Ascending aorta (tissue), 2 donors: ENCODE measurements at regions of chr20 and their contacts with region 1.

Region 1: DNA sequence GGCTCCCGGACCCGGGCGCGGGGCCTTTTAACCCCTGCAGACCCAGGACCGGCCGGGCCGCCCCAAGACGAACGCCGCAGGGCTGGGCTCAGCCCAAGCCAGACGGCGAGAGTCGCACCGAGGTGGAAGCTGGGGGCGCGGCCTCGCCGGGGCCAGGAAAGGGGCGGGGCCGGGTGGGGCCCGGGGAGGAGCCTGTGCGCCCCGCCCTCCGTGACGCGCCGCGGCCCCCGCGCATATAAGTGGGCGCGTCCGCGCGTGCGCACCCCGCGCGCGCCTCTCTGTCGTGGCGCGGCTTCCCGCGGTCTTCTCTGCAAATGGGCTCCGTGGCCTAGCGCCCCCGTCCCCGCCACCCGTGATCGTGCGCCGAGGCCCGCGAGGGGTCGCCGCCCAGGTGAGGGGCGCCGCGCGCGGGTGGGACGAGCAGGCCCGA is at the start of gene PPDPF:
- DNase-seq: peak in 1 of 2 donors; percentile 88
- H3K4me3 ChIP-seq: peak within 1 kb of the TSS; percentile 80 to 97
- H3K27ac ChIP-seq: peak within 1 kb of the TSS; percentile 83 to 90
- H3K4me1 ChIP-seq: peaks cover 16 to 18% of the 10 kb centered on the region in 2 donors
- H3K27me3 ChIP-seq: no peaks in the 10 kb centered on the region
- CTCF ChIP-seq: no peak
- total RNA-seq, gene PPDPF: 242 TPM

Region 2: GRCh38 chr20:63360850-63361518 is 159.5 kb before region 1 on chr20 and contains the start of gene CHRNA4:
- intact Hi-C with region 1: no loop called
- DNase-seq: no peak
- H3K4me3 ChIP-seq: no peak within 1 kb of the TSS
- H3K27ac ChIP-seq: no peak within 1 kb of the TSS
- H3K4me1 ChIP-seq: no peaks in the 10 kb centered on the region
- H3K27me3 ChIP-seq: peaks cover 14% of the 10 kb centered on the region
- CTCF ChIP-seq: no peak
- total RNA-seq, gene CHRNA4: not detected

Region 3: GRCh38 chr20:63495741-63496595 is 24.6 kb before region 1 on chr20:
- intact Hi-C with region 1: loop called (anchors 1 kb)
- DNase-seq: peak in 1 of 2 donors; percentile 78
- H3K4me3 ChIP-seq: peak overlapping the region; percentile 35 to 47
- H3K27ac ChIP-seq: no peak overlapping the region
- H3K4me1 ChIP-seq: peaks cover 0 to 7% of the 10 kb centered on the region in 2 donors
- H3K27me3 ChIP-seq: peaks cover 9% of the 10 kb centered on the region
- CTCF ChIP-seq: peak; percentile 74 to 96 (median 92)

Region 4: DNA sequence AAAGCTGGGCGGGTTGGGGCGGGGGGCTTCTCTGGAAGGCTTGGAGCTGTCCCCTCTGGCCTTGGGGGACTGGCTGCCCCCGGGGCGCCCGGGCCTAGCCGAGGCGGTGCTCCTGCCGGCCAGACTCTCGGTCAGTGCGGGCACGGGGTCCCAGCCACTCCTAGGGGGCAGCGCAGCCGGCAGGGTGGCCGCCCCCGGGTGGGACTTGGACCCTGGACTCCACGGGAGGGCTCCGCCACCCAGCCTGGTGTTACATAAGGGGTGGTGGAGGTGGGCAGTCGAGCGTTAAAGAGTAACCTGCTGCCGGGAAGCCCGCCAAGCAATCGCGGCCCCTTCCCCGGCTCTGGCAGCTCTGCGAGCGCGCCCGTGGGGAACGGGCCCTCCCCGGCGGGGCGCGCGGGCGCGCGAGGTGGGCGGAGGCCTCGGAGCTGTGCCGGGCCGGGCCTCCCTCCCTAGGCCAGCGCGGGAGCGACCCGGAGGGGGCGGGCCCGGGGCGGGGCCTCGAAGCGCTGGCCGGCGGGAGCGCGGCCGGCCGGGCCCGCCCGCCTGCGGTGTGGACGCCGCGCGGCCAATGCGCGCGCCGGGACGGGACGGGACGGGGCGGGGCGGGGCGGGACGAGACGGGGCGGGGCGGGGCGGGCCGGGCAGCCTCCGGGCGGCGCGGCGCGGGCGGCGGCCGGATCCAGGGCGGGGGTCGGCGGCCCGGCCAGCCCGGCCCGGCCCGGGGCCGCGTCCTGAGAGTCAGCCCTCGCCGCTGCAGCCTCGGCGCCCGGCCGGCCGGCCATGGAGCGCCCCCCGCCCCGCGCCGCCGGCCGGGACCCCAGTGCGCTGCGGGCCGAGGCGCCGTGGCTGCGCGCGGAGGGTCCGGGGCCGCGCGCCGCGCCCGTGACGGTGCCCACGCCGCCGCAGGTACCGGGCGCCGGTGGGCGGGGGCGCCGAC is 218.9 kb after region 1 on chr20 and contains the start of gene SLC2A4RG:
- intact Hi-C with region 1: loop called (anchors 2 kb)
- DNase-seq: peak in 1 of 2 donors; percentile 86
- H3K4me3 ChIP-seq: peak within 1 kb of the TSS; percentile 85 to 93
- H3K27ac ChIP-seq: peak within 1 kb of the TSS; percentile 87 to 96
- H3K4me1 ChIP-seq: peaks cover 17 to 21% of the 10 kb centered on the region in 2 donors
- H3K27me3 ChIP-seq: no peaks in the 10 kb centered on the region
- CTCF ChIP-seq: no peak
- total RNA-seq, gene SLC2A4RG: 114 TPM

Region 5: GRCh38 chr20:63955827-63956663 is 435.5 kb after region 1 on chr20 and contains the start of gene UCKL1:
- intact Hi-C with region 1: loop called (anchors 5 kb)
- DNase-seq: peak; percentile 73 to 96
- H3K4me3 ChIP-seq: peak within 1 kb of the TSS; percentile 75 to 93
- H3K27ac ChIP-seq: peak within 1 kb of the TSS; percentile 82 to 87
- H3K4me1 ChIP-seq: peaks cover 7 to 35% of the 10 kb centered on the region in 2 donors
- H3K27me3 ChIP-seq: no peaks in the 10 kb centered on the region
- CTCF ChIP-seq: no peak
- total RNA-seq, gene UCKL1: 95.4 TPM

Region 6: DNA sequence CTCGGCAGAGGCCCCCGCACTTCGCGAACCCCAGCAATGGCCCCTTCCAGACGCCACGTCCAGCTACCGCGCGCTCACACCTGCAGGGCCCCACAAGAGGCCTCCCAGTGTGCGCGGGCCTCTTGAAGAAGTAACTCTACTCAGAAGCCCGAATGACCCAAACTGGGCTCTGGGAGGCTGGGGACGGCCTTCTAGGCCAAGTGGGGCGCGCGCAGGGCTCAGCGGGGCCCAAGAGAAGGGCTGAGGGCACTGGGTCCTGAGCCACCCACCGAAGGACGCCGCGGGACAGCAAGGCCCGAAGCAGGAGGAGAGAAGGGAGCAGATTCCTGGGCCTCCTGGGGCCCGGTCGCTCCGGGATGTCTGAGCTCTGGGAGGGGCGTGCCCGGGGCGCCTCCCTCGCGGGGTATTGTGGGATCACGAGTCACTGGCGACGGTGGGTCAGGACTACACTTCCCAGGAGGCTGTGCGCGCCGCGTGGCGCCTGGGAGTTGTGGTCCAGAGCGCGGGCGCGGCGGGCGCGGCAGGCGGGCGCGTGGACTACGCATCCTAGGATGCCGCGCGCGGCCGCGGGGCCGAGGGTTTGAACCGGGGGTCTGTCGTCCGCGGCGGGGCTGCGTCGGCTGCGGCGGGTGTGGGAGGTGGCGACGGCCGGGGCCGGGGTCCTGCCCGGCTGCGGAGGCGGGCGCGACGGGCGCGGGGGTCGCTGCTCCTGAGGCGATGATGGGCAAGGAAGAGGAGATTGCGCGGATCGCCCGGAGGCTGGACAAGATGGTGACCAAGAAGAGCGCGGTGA is 542.3 kb after region 1 on chr20 and contains the start of gene TCEA2:
- intact Hi-C with region 1: loop called (anchors 2 kb)
- DNase-seq: peak; percentile 89 to 98
- H3K4me3 ChIP-seq: peak within 1 kb of the TSS; percentile 76 to 93
- H3K27ac ChIP-seq: peak within 1 kb of the TSS; percentile 87 to 90
- H3K4me1 ChIP-seq: peaks cover 16 to 22% of the 10 kb centered on the region in 2 donors
- H3K27me3 ChIP-seq: no peaks in the 10 kb centered on the region
- CTCF ChIP-seq: no peak
- total RNA-seq, gene TCEA2: 61.4 TPM